Pancreas (tissue), 10 donors: ENCODE measurements at regions of chr6 and their contacts with region 1.

Region 1: DNA sequence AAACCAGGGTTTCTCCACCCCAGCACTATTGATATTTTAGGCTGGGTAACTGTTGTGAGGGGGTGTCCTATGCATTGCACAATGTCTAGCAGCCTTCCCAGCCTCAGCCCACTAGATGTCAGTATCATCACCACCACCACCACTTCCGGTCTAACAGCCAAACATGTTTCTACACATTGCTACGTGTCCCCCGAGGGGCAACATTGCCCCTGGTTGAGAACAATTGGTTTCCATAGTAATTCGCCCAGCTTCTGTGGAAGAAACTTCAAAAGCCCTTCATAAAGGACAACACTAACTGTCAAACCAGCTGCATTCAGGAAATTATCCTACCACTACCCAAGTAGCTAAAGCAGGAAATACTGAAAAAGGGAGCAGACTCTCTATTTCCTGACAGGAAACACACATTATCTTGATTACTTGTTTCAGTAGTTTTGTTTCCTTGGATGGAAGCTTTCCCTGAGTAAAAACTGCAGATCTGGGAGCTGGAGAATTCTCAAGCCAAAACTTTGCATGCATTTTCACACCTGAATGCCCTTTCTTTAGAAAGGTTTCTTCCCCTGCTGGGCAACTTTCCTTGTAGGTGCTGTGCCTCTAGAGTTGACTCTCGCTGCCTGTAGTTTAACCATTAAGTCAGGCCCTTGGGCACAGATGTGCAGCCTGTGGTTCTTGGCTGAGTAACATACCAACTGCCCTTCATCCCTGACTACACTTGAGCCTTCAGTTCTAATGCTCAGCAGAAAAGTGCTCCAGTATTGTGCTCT is 23.6 kb downstream of the PKHD1 start:
- DNase-seq: peak in 4 of 6 donors; percentile 23 to 56 (median 42)
- ATAC-seq: peak; percentile 88 to 98 (median 94)
- H3K4me3 ChIP-seq: no peak overlapping the region
- H3K27ac ChIP-seq: no peak overlapping the region
- H3K4me1 ChIP-seq: peaks cover 0 to 3% (median 0%) of the 10 kb centered on the region in 3 donors
- H3K27me3 ChIP-seq: no peaks in the 10 kb centered on the region
- CTCF ChIP-seq: peak in 3 of 4 donors; percentile 21 to 37 (median 36)

Region 2: DNA sequence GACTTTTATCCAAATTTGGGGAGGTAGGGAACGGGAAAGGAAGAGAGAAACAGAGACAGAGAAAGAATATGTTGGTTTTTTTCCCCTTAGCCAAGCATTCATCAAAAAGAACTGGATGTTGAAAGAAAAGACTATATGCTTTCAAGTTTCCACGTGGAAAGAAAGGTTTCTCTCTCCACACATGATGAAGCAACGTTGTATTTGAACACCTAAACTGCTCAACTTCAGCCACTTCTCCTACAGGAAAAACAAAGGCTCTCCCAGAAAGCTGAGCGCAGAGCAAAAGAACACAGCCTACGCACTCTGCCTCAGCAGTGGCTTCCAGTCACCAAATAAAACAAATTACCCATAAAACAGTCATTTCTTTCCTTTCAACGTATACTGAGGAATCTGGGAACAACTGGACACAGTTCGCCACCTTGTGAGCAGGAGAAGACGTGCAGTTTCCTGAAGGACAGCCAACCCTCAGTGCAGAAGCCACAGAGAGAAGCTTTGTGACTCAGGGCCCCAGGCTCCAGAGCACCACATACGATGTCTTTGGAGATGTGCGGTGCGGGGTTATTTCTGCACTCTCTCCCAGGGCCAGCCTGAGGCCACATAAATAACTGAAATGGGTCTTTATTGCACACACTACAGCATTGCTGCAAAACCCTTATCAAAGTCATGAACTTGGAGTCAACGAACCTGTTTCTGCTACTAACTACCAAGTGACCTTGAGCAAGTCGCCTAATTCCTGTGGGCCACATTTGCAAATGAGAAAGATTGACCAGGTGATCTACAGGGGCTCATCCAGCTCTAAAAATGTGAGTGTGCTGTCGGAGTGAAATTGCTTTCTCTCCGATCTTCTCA is 170.4 kb after region 1 on chr6:
- intact Hi-C with region 1: loop called in 1 of 3 experiments (anchors 10 kb)
- DNase-seq: peak in 3 of 6 donors; percentile 22 to 59 (median 47)
- ATAC-seq: peak; percentile 74 to 97 (median 94)
- H3K4me3 ChIP-seq: no peak overlapping the region
- H3K27ac ChIP-seq: no peak overlapping the region
- H3K4me1 ChIP-seq: no peaks in the 10 kb centered on the region
- H3K27me3 ChIP-seq: no peaks in the 10 kb centered on the region
- CTCF ChIP-seq: peak; percentile 23 to 47 (median 30)